ENCODE measurements at regions of chr4 and their contacts with region 1.

Region 1: DNA sequence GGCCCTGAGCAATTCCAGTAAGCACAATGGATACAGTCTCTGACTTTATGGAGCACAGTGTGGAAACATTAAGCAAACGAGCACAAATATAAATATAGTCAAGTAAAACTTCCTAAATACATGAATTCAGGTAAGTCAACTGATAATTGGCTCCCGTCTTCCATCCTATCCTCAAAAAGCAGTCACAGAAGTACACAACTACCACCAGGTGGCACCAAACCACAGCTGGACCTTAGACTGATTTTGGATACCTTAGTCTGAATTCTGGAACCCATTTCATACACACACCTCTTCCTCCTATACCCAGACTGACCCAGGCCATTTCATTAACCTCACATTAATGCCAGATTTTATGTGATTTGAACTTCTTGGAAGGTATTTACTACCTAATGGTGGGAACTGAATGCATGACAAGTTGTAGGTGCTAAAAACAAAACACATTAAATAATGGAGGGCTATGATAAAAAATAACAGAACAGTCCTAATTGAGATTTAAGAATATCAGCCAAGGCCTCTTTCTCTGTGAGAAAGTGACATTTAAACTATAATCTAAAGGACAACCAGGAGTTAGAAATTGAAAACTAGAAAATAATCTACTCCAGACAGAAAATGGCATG is 77.5 kb downstream of the ELF2 start:
- DNase-seq: peak; percentile 75
- CTCF ChIP-seq: peak; percentile 77

Region 2: GRCh38 chr4:139083956-139084803 is 15.3 kb before region 1 on chr4:
- CTCF ChIA-PET with region 1: interaction called, 37 read pairs
- POLR2A ChIA-PET with region 1: no interaction called
- DNase-seq: peak; percentile 83
- CTCF ChIP-seq: no peak

Region 3: DNA sequence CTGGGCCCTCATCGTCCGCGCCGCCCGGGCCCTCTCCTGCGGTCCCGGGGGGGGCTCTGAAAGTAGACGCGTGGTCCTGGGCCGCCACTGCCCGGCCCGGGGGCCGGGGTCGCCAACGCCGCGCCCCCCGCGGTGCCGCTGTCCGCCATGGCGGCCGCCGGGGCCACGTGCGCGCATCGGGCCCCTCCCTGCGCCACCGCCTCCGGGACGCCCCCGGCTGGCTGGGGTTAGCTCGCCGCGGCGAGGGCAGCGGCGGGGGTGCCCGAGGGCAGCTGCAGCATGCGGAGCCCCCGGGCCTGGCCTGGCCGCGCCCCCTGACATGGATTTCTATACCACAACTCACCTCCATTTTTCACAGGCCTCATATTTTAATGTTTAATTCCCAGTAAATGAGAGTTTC is 15.8 kb after region 1 on chr4:
- CTCF ChIA-PET with region 1: interaction called, 16 read pairs
- POLR2A ChIA-PET with region 1: no interaction called
- DNase-seq: no peak
- CTCF ChIP-seq: no peak

Region 4: GRCh38 chr4:139167774-139168444 is 68.4 kb after region 1 on chr4:
- CTCF ChIA-PET with region 1: interaction called, 11 read pairs
- POLR2A ChIA-PET with region 1: no interaction called
- DNase-seq: no peak
- CTCF ChIP-seq: peak; percentile 26

Region 5: GRCh38 chr4:139177868-139178611 is 78.6 kb after region 1 on chr4:
- CTCF ChIA-PET with region 1: interaction called, 11 read pairs
- POLR2A ChIA-PET with region 1: interaction called, 5 read pairs
- DNase-seq: peak; percentile 90
- CTCF ChIP-seq: no peak